ENCODE measurements at regions of chr5 and their contacts with region 1.

Region 1: DNA sequence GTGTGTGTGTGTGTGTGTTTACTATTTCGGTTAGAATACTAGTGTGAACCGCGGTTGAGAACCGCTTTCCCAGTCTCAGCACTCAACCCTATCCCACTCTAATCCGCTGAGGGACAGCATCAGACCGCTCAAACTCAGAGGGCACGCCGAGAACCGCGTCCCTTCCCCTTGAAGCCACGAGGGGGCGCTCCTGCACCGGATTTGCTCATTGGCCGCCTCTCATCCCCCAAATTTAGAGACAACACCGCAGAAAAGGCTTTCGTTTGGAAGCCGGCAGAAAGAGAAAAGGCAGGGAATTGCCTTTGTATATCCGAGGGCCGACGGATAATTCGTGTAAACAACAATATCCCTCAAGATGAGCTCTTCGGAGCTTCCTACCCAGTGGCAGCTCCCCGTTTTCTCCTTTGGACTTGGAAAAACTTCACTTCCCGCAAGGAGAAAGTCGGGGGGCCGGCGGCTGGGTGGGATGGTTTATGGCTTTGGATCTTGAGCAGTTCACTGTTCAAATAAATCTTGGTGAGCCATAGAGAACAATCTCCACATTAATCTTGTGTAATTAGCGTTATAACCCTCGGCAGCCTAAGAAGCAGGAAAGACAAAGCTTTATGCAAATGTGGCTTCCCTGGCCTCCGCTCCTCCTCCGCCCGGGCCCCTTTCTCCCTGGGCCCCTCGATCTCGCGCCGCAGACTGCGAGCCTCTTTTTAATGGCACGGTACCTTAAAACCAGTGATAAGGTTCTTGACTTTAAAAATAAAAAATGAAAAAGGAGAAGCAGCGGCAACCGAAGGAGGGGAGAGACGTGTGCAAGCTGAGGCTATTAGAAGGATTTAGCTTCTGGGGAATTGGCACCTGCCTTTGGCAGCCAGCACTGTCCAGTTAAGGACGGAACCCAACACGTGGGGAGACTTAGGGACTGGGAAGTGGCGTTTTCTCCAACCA is 296.8 kb downstream of the PARP8 start:
- DNase-seq: peak; percentile 63
- H3K4me3 ChIP-seq: peak overlapping the region; percentile 38 to 40
- H3K27ac ChIP-seq: peak overlapping the region; percentile 77 to 83
- H3K4me1 ChIP-seq: no peaks in the 10 kb centered on the region
- H3K27me3 ChIP-seq: no peaks in the 10 kb centered on the region
- CTCF ChIP-seq: peak; percentile 86 to 94 (median 90)
- POLR2A ChIP-seq: no peak

Region 2: GRCh38 chr5:51684794-51685355 is 721.7 kb after region 1 on chr5:
- intact Hi-C with region 1: loop called (anchors 10 kb)
- DNase-seq: no peak
- H3K4me3 ChIP-seq: no peak overlapping the region
- H3K27ac ChIP-seq: no peak overlapping the region
- H3K4me1 ChIP-seq: no peaks in the 10 kb centered on the region
- H3K27me3 ChIP-seq: no peaks in the 10 kb centered on the region
- CTCF ChIP-seq: peak in 3 of 4 experiments; percentile 11 to 35 (median 20)
- POLR2A ChIP-seq: no peak

Region 3: DNA sequence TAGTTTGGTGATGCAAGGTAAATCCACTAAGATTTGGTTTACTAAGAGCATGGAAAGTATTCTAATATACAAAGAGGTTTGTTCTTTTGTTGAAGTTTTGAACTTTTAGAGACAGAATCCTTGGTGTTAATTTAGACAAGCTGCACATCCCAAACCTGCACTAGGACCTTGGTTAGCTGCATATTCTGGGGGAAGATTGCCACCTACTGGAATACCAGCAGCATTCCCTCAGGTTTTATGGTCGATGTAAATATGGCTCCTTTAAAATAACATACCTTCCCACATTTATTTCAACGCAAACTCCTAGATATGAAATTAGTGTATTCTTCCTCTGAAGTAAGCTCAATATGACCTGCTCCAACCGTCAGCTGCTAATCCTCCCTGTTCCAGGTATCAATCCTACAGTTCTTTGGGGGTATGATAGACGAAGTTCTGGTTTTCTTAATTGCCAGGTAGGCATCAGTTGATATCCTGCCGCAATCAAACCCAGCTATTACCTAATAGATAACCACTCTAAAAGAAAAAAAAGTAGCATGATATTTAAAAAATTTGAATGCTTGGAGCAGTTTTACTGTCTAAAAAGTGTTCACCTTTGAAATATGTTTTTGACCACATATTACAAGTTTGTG is 1044.1 kb after region 1 on chr5:
- intact Hi-C with region 1: loop called (anchors 5 kb)
- DNase-seq: peak; percentile 13
- H3K4me3 ChIP-seq: no peak overlapping the region
- H3K27ac ChIP-seq: no peak overlapping the region
- H3K4me1 ChIP-seq: no peaks in the 10 kb centered on the region
- H3K27me3 ChIP-seq: no peaks in the 10 kb centered on the region
- CTCF ChIP-seq: peak in 3 of 4 experiments; percentile 45 to 71 (median 57)
- POLR2A ChIP-seq: no peak

Region 4: DNA sequence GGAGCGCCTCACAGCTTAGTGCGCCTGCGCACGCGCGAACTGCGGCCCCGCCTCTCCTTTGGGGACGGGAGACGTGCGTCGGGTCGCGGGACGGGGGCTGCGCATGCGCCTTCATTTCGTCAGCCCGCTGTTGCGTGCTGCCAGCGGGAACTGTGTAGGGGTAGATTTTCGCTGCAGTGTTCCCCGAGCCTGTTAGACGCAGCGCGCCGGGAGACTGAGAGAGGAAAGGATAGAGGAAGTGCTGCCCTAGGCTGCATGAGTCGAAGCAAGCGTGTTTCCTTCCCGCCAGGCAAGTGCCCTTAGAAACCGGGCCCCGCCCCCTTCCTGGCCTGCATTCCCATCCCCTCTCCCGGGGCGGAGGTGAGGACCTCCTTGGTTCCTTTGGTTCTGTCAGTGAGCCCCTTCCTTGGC is 1836.8 kb after region 1 on chr5:
- intact Hi-C with region 1: loop called (anchors 10 kb)
- DNase-seq: peak; percentile 93
- H3K4me3 ChIP-seq: peak overlapping the region; percentile 43 to 66
- H3K27ac ChIP-seq: peak overlapping the region; percentile 91
- H3K4me1 ChIP-seq: peaks cover 13% of the 10 kb centered on the region
- H3K27me3 ChIP-seq: no peaks in the 10 kb centered on the region
- CTCF ChIP-seq: no peak
- POLR2A ChIP-seq: peak; percentile 86